Dorsolateral prefrontal cortex (tissue), 120 donors: ENCODE measurements at regions of chr6 and their contacts with region 1.

Region 1: DNA sequence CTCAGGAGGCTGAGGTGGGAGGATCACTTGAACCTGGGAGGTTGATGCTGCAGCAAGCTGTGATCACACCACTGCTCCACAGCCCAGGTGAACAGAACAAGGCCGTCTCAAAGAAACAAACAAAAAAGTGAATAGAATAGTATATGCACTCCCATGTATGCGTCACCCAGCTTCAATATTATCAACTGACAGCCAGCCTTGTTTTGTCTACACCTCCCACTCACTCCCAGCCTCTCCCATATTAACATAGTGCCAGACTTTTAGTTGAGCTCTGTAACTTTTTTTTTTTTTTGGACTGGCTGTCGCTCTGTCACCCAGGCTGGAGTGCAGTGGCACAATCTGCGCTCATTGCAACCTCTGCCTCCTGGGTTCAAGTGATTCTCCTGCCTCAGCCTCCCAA is 18.1 kb upstream of the ILRUN start:
- DNase-seq: no peak
- H3K4me3 ChIP-seq: no peak overlapping the region
- H3K27ac ChIP-seq: no peak overlapping the region
- H3K27me3 ChIP-seq: no peaks in the 10 kb centered on the region
- CTCF ChIP-seq: no peak

Region 2: DNA sequence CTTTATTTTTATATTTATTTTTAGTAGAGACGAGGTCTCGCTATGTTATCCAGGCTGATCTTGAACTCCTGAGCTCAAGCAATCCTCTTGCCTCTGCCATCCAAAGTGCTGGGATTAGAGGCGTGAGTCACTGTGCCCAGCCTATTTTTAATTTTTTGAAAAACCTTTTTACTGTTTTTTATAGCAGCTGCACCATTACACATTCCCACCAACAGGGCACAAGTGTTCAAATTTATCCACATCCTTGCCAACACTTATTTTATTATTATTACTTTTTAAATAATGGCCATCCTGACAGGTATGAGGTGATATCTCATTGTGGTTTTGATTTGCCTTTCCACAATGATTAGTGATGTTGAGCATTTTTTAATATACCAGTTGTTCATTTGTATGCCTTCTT is 206.2 kb before region 1 on chr6:
- intact Hi-C with region 1: no loop called
- DNase-seq: peak in 1 of 10 donors; percentile 12
- H3K4me3 ChIP-seq: no peak overlapping the region
- H3K27ac ChIP-seq: peak overlapping the region in 1 of 59 donors; percentile 7
- H3K27me3 ChIP-seq: no peaks in the 10 kb centered on the region
- CTCF ChIP-seq: peak in 3 of 56 donors; percentile 11 to 23 (median 20)

Region 3: GRCh38 chr6:34745277-34746103 is 30.8 kb after region 1 on chr6:
- intact Hi-C with region 1: loop called in 1 of 2 experiments (anchors 5 kb)
- DNase-seq: no peak
- H3K4me3 ChIP-seq: no peak overlapping the region
- H3K27ac ChIP-seq: no peak overlapping the region
- H3K27me3 ChIP-seq: no peaks in the 10 kb centered on the region
- CTCF ChIP-seq: no peak